Activated CD4-positive, alpha-beta T cell treated with anti-CD3 and anti-CD28 coated beads for 36 hours (primary cell): ENCODE measurements at regions of chr1 and their contacts with region 1.

Region 1: GRCh38 chr1:72037745-72038343 is 244.5 kb downstream of the NEGR1 start:
- DNase-seq: peak; percentile 38
- ATAC-seq: no peak
- H3K4me3 Mint-ChIP-seq: no peak overlapping the region
- H3K27ac Mint-ChIP-seq: no peak overlapping the region
- H3K4me1 Mint-ChIP-seq: no peaks in the 10 kb centered on the region
- H3K27me3 Mint-ChIP-seq: no peaks in the 10 kb centered on the region

Region 2: DNA sequence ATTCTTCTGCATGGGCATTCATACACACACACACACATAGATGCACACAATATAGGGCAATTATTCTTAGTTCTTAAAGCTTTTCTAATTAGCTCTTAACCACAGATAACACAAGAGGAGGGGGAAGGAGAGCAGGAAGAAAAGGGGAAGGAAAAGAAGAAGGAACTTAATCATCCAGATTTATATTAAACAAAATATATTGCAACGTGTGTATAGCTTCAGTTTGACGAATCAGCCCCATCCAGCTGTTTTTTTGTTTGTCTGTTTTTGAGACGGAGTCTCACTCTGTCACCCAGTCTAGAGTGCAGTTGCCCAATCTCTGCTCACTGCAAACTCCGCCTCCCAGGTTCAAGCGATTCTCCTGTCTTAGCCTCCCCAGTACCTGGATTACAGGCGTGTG is 1661.6 kb before region 1 on chr1:
- CTCF ChIA-PET with region 1: no interaction called
- POLR2A ChIA-PET with region 1: no interaction called
- intact Hi-C with region 1: no loop called
- DNase-seq: no peak
- ATAC-seq: no peak
- H3K4me3 Mint-ChIP-seq: no peak overlapping the region
- H3K27ac Mint-ChIP-seq: no peak overlapping the region
- H3K4me1 Mint-ChIP-seq: no peaks in the 10 kb centered on the region
- H3K27me3 Mint-ChIP-seq: no peaks in the 10 kb centered on the region

Region 3: GRCh38 chr1:71587961-71588360 is 449.9 kb before region 1 on chr1:
- CTCF ChIA-PET with region 1: no interaction called
- POLR2A ChIA-PET with region 1: no interaction called
- intact Hi-C with region 1: loop called in 1 of 2 experiments (anchors 5 kb)
- DNase-seq: no peak
- ATAC-seq: no peak
- H3K4me3 Mint-ChIP-seq: no peak overlapping the region
- H3K27ac Mint-ChIP-seq: no peak overlapping the region
- H3K4me1 Mint-ChIP-seq: no peaks in the 10 kb centered on the region
- H3K27me3 Mint-ChIP-seq: no peaks in the 10 kb centered on the region